ENCODE measurements at regions of chr15 and their contacts with region 1.

Region 1: GRCh38 chr15:34109797-34110663 is 8.1 kb downstream of the PGBD4 start:
- DNase-seq: no peak
- H3K4me3 ChIP-seq: no peak overlapping the region
- CTCF ChIP-seq: peak; percentile 59

Region 2: DNA sequence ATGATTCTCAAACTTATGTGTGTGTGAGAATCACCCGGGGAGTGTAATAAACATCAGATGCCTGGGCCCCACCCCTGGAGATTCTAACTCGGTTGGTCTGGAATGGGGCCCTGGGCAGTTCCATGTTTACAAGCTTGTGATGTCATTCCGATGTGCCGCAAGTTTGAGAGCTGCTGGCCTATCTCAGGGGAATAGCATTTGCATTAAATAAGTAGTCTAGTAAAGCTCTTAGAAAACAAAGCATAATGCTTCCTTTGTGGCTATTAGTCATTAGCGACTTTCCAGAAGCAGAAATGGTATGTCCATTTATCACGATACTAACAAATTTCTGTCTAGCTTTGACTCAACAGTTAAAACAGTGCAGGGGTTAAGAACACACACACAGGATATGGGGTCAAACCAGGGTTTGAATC is 12.7 kb after region 1 on chr15:
- CTCF ChIA-PET with region 1: interaction called, 12 read pairs
- POLR2A ChIA-PET with region 1: no interaction called
- DNase-seq: peak; percentile 69
- H3K4me3 ChIP-seq: no peak overlapping the region
- CTCF ChIP-seq: no peak

Measured in AG04449 (cell line).